Activated CD4-positive, alpha-beta T cell treated with anti-CD3 and anti-CD28 coated beads, Interleukin-2, amount 10 ng/mL, durations not matched to agents 24 days and 14 days (primary cell): ENCODE measurements at regions of chr21 and their contacts with region 1.

Region 1: GRCh38 chr21:26170471-26171257 is at the start of gene APP:
- DNase-seq: peak; percentile 98
- H3K4me3 Mint-ChIP-seq: peak within 1 kb of the TSS; percentile 92
- H3K27ac Mint-ChIP-seq: peak within 1 kb of the TSS; percentile 85
- H3K4me1 Mint-ChIP-seq: peaks cover 20% of the 10 kb centered on the region
- H3K27me3 Mint-ChIP-seq: peaks cover 2% of the 10 kb centered on the region
- total RNA-seq, gene APP: 75.8 and 81.3 TPM in 2 replicates

Region 2: GRCh38 chr21:25734904-25735645 is 435.6 kb before region 1 on chr21 and contains the starts of genes ATP5PF and GABPA:
- intact Hi-C with region 1: loop called (anchors 1 kb)
- DNase-seq: peak; percentile 99
- H3K4me3 Mint-ChIP-seq: peak within 1 kb of the TSS; percentile 100
- H3K27ac Mint-ChIP-seq: peak within 1 kb of the TSS; percentile 100
- H3K4me1 Mint-ChIP-seq: peaks cover 35% of the 10 kb centered on the region
- H3K27me3 Mint-ChIP-seq: peaks cover 4% of the 10 kb centered on the region
- total RNA-seq, gene ATP5PF: 174 TPM in 2 replicates
- total RNA-seq, gene GABPA: 25.6 and 27.6 TPM in 2 replicates

Region 3: DNA sequence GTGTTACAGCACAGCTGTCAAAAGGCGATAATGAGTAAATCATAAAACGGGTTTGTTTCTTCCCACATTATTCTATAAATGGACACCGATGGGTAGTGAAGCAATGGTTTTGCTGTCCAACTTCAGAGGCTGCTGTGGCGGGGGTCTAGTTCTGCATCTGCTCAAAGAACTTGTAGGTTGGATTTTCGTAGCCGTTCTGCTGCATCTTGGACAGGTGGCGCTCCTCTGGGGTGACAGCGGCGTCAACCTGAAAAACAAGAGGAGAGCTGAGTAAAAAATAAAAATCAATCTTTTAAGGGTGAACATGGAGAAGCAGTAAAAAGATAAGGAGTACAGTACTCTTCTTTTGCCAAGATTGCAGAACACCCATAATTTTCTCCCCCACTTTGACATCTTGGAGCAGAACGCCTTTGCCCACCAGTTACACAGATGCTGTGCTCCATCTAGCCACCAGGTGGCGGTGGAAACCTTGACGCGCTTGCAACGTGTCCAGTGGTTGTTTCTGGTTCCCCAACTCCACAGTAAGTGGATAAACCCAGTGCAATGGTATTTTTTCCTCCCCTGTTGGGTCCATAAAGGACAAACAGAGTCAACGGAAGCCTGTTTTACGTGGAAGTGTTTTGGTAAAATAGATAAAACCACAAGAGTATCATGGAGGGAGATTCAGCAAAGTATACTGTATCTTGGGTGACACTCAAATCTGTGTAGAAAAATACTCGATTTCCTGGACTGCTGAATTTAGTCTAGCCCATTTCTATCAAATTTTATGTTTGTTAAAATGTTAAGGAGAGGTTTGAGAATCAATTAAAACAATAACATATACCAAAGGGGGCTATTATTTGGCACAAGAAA is 288.9 kb before region 1 on chr21:
- intact Hi-C with region 1: loop called (anchors 1 kb)
- DNase-seq: peak; percentile 90
- H3K4me3 Mint-ChIP-seq: no peak overlapping the region
- H3K27ac Mint-ChIP-seq: no peak overlapping the region
- H3K4me1 Mint-ChIP-seq: no peaks in the 10 kb centered on the region
- H3K27me3 Mint-ChIP-seq: no peaks in the 10 kb centered on the region

Region 4: GRCh38 chr21:25983745-25984144 is 186.9 kb before region 1 on chr21:
- intact Hi-C with region 1: loop called (anchors 5 kb)
- DNase-seq: no peak
- H3K4me3 Mint-ChIP-seq: no peak overlapping the region
- H3K27ac Mint-ChIP-seq: no peak overlapping the region
- H3K4me1 Mint-ChIP-seq: peaks cover 8% of the 10 kb centered on the region
- H3K27me3 Mint-ChIP-seq: no peaks in the 10 kb centered on the region